HEK293 (cell line): ENCODE measurements at regions of chr7 and their contacts with region 1.

Region 1: DNA sequence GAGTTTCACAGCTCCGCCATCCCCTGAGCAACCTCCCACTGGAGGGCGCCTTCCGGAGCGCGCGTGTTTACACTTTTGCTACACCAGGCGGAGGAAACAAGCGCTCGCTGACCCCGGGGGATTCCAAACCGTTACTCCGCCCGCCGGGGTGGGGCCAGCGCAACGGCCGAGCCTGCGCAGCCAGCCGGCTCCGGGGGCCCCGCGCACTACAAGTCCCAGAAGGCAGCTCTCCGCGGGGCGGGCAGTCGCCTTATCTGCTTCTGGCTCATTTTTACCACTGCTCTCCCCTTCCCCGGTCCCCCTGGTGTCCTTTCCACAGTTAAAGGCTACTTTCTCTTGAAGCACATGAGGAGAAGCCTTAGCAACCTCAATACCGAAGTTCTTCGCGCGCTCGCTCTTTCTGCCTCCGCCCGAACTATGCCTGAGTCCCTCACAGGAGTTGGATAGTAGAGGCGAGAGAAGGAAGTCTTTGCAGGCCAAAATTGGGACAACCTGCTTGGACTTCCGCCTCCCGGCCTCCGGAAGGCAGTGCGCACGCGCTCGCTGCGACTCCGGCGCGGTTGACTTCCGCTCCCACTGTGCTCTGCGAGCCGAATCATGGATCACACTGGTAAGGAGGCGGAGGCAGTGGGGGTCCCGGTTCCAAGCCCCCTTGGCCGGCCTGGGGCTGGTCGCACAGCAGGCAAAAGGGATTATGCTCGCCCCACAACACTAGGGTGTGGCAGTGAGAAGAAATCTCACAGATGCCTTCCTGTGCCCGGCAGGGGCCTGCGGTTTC is at the start of gene CBLL1:
- H3K4me3 ChIP-seq: peak within 1 kb of the TSS; percentile 73
- H3K27ac ChIP-seq: peak within 1 kb of the TSS; percentile 82
- H3K4me1 ChIP-seq: peaks cover 2% of the 10 kb centered on the region; the same call in 1 of the 2 replicates
- CTCF ChIP-seq: peak; percentile 94

Region 2: DNA sequence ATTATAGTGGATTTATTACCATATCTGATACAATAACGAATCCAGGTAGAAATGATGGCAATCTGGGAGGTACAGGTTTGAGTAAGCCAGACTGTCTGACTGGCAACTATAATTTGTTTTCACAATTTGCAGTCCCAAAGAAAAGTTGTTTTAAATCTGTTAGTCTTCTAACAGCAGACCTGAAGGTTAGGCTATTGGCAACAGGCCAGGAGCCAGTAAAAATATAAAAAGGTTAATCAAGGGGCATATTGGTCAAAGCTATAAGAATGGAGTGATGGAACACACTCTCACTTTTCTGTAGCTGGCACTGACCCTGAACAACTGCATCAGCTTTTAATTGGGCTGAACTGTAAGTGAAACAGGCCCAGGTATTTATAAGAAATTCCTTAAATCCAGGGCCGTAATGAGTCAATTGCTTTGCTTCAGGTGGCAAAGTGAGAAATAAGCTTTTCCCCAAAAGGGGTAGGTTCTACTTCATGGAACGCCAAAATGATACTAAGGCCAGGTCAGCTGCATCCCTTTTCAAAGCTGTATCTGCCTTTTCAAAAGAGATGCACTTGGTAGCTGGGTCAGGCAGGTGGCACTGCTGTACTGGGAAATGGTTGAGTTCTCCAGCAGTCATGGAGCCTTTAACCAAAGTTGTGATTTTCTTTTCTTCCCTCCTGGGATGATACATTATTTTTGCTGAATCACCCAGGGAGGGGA is 280.9 kb before region 1 on chr7:
- CTCF ChIA-PET with region 1: interaction called, 10 read pairs
- POLR2A ChIA-PET with region 1: no interaction called
- H3K4me3 ChIP-seq: no peak overlapping the region
- H3K27ac ChIP-seq: no peak overlapping the region
- H3K4me1 ChIP-seq: no peaks in the 10 kb centered on the region
- CTCF ChIP-seq: peak; percentile 71